ENCODE measurements at regions of chr9 and their contacts with region 1.

Region 1: GRCh38 chr9:76996700-76997099 is 22.8 kb upstream of the FOXB2 start:
- DNase-seq: peak in 8 of 10 donors; percentile 40 to 65 (median 55)
- H3K4me3 ChIP-seq: no peak overlapping the region
- H3K27ac ChIP-seq: no peak overlapping the region
- H3K27me3 ChIP-seq: no peaks in the 10 kb centered on the region
- CTCF ChIP-seq: peak in 55 of 56 donors; percentile 20 to 74 (median 54)

Region 2: DNA sequence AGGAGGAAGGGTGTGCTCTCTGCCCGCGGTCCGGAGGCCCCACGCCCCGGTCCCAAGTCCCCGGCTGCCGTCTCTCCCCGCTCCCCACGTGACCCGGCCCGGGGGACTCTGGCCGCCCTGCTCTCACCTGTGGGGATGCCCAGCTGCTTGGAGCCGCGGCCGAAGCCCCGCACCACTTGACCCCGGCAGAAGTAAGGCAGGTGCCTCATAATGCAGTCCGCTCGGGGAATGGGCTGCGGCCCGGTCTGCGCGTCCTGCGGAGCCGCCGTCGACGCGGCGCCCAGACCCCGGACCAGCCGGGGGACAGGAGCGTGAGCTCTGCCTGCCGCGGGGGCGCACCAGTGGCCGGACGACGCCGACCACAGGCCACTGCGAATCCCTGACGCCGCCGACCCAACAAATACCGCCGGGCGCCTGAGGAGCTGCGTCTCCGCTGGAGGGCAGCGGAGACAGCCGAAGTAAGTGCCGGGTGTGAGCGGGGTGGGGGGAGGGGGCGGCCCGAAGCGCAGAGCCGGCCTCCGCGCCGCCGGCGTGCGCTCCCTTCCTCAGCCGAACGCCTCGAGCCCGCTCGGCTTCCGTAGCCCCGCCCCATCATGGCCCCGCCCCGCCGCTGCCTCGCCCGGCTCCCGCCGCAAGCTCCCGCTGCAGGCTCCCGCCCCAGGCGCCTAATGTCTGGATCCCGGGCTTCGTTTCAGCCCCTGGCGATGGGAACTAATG is 602.6 kb before region 1 on chr9 and contains the start of gene RFK:
- intact Hi-C with region 1: loop called in 1 of 2 experiments (anchors 10 kb)
- DNase-seq: peak; percentile 79 to 94 (median 88)
- H3K4me3 ChIP-seq: peak within 1 kb of the TSS; percentile 68 to 99 (median 92)
- H3K27ac ChIP-seq: peak within 1 kb of the TSS; percentile 60 to 98 (median 95)
- H3K27me3 ChIP-seq: no peaks in the 10 kb centered on the region
- CTCF ChIP-seq: peak in 55 of 56 donors; percentile 6 to 87 (median 60)
- total RNA-seq, gene RFK: 15.3 to 57.0 (median 37.1) TPM

Region 3: DNA sequence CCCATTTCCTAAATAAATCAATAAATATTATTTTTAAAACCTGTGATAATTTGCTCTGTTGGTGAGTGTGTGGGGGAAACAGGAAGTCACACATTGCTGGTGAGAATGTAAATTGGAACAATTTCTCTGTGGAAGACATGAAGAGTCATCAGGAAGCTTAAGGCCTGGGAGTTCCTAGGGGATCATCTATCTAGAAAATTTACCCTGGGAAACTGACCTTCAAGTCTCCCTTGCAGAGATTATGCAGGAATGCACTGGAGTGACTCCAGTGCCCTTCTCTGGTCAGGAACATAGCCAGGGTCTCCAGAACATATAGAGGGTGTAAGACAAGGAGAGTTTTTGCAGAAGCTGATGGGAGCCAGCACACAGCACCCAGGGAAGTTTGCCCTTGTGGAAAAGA is 550.7 kb before region 1 on chr9:
- intact Hi-C with region 1: loop called in 1 of 2 experiments (anchors 5 kb)
- DNase-seq: no peak
- H3K4me3 ChIP-seq: no peak overlapping the region
- H3K27ac ChIP-seq: no peak overlapping the region
- H3K27me3 ChIP-seq: no peaks in the 10 kb centered on the region
- CTCF ChIP-seq: no peak

Region 4: GRCh38 chr9:76542360-76542759 is 454.3 kb before region 1 on chr9:
- intact Hi-C with region 1: no loop called
- DNase-seq: no peak
- H3K4me3 ChIP-seq: no peak overlapping the region
- H3K27ac ChIP-seq: no peak overlapping the region
- H3K27me3 ChIP-seq: no peaks in the 10 kb centered on the region
- CTCF ChIP-seq: no peak

Region 5: DNA sequence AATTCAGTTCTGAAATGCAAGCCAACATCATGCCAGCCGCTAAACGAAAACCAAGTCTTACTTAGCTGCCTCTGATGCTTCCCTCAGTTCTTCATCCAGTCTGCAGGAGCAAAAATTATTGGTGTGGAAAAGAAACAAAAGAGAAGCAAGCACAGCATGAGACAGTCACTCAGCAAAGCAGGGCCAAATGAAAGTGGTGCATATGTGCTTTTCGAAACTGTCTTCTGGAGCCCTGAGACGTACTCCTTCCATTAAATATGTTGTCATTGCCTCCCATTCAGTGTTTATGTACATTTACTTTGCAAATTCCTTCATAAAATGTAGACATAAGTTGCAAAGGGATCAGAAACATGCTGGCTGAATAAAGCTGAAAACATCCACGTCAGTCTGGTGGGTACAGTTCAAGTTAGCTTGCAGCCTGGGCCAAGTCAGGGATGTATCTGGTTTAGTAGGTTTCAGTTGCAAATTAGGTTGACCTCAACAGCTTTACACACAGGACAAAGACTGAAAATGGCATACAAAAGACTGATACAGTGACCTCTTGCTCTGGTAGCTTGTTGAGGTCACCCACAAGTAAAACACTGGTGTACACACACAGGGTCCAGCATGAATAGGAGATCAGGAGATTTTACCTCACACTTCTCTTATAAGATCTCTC is 372.2 kb before region 1 on chr9:
- intact Hi-C with region 1: loop called in 1 of 2 experiments (anchors 10 kb)
- DNase-seq: peak in 1 of 10 donors; percentile 14
- H3K4me3 ChIP-seq: no peak overlapping the region
- H3K27ac ChIP-seq: peak overlapping the region in 1 of 59 donors; percentile 62
- H3K27me3 ChIP-seq: no peaks in the 10 kb centered on the region
- CTCF ChIP-seq: no peak

Region 6: GRCh38 chr9:77158772-77159513 is 162.2 kb after region 1 on chr9:
- intact Hi-C with region 1: loop called in 1 of 2 experiments (anchors 10 kb)
- DNase-seq: no peak
- H3K4me3 ChIP-seq: no peak overlapping the region
- H3K27ac ChIP-seq: no peak overlapping the region
- H3K27me3 ChIP-seq: peaks cover 0 to 7% (median 0%) of the 10 kb centered on the region in 45 donors
- CTCF ChIP-seq: no peak

Region 7: DNA sequence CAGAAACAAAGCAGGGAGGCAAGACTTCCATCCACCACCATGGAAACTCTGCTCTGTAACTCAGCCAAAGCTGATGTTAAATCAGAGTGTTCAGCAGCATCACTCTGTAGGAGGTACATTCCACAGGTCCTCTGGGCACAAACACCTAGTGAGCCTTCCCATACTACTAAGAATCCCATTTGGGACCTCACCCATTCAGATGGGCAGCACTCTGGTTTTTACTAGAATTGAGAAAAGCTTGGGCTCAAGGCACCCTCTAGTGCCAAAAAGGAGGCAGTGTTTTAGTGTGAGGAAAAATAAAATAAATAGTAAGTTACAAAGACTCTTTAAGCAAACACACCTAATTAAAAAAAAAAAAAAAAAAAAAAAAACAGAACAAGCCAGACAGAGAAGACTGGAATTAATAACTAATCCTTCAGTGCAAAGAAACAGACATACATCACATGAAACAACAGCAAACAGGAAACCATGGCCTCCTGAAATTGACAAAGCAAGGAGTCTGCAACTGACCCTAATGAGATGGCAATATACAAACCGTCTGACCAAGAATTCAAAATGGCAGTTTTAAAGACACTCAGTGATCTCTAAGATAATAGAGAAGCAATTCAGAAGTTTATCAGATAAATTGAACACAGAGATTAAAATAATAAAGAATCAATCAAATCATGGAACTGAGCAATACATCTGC is 491.9 kb after region 1 on chr9:
- intact Hi-C with region 1: no loop called
- DNase-seq: no peak
- H3K4me3 ChIP-seq: no peak overlapping the region
- H3K27ac ChIP-seq: no peak overlapping the region
- H3K27me3 ChIP-seq: no peaks in the 10 kb centered on the region
- CTCF ChIP-seq: peak in 13 of 56 donors; percentile 10 to 34 (median 18)

Measured in dorsolateral prefrontal cortex (tissue), 120 donors.